ENCODE measurements at regions of chr2 and their contacts with region 1.

Region 1: DNA sequence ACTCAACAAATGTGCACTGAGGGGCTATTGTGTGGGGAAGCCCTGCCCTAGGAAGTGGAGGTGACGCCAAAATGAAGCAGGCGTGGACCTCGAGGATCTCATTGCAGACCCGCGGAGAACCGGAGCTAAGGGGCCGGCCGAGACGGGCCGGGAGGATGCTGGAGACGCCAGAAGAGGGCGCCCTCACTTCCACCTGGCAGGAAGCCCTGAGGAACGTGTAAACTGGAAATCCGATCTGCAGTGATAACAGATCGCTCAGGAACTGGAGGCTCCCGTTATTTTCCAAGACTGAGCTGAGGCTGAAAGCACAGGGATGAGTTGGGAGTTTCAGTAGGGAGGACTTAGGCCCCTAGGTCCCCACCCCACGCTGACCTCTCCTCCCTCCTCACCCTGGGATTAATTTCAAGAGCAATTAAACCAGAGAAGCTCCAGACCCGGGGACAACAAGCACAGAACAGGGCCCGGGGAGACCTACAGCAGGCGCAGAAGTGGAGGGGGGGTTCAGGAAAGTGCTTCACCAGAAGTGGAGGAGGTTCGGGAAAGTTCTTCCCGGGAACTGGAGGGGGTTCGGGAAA is 7.7 kb upstream of the COL6A3 start:
- DNase-seq: peak; percentile 77 to 85
- ATAC-seq: peak; percentile 84 to 92 (median 88)
- H3K4me3 ChIP-seq: peak overlapping the region in 7 of 10 donors; percentile 1 to 38 (median 27)
- H3K27ac ChIP-seq: peak overlapping the region in 9 of 10 donors; percentile 0 to 54 (median 23)
- H3K4me1 ChIP-seq: peaks cover 0 to 28% (median 18%) of the 10 kb centered on the region in 9 donors
- H3K27me3 ChIP-seq: peaks cover 0 to 10% (median 3%) of the 10 kb centered on the region in 7 donors
- CTCF ChIP-seq: peak; percentile 61 to 93 (median 87)

Region 2: DNA sequence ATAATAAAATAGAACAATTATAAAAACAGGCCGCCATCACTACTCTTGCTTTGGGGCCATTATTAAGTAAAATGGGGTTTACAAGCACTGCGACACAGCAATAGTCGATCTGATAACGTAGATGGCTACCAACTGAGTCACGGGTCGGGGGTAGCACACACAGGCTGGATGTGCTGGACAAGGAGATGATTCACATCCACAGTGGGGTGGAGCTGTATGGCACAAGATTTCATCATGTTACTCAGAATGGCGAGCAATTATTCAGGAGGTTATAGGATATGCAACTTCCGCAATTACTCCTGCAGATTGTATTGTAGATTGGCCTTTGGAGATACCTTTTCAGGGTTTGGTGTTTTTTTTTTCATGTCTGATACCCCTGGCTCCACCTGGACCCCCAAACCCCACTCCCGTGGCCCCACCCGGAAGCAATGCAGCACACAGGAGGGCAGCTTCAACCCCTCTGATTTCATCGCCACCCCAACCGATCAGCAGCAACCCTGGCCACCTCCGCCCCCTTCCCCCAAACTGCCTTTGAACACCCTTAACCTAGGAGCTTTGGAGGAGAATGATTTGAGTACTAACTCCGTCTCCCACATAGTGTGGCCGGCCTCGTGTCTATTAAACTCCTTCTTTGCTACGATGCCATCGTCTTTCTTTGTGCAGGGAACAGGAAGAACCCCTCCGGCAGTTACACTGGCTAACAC is 44.0 kb after region 1 on chr2:
- intact Hi-C with region 1: loop called in 3 of 10 experiments (anchors 5 kb)
- DNase-seq: no peak
- ATAC-seq: no peak
- H3K4me3 ChIP-seq: no peak overlapping the region
- H3K27ac ChIP-seq: no peak overlapping the region
- H3K4me1 ChIP-seq: no peaks in the 10 kb centered on the region
- H3K27me3 ChIP-seq: no peaks in the 10 kb centered on the region
- CTCF ChIP-seq: no peak

Region 3: GRCh38 chr2:237500681-237501424 is 79.2 kb after region 1 on chr2:
- intact Hi-C with region 1: no loop called
- DNase-seq: no peak
- ATAC-seq: peak in 4 of 8 donors; percentile 15 to 58 (median 48)
- H3K4me3 ChIP-seq: no peak overlapping the region
- H3K27ac ChIP-seq: no peak overlapping the region
- H3K4me1 ChIP-seq: peaks cover 0 to 26% (median 3%) of the 10 kb centered on the region in 9 donors
- H3K27me3 ChIP-seq: peaks cover 0 to 3% (median 0%) of the 10 kb centered on the region in 7 donors
- CTCF ChIP-seq: no peak

Region 4: DNA sequence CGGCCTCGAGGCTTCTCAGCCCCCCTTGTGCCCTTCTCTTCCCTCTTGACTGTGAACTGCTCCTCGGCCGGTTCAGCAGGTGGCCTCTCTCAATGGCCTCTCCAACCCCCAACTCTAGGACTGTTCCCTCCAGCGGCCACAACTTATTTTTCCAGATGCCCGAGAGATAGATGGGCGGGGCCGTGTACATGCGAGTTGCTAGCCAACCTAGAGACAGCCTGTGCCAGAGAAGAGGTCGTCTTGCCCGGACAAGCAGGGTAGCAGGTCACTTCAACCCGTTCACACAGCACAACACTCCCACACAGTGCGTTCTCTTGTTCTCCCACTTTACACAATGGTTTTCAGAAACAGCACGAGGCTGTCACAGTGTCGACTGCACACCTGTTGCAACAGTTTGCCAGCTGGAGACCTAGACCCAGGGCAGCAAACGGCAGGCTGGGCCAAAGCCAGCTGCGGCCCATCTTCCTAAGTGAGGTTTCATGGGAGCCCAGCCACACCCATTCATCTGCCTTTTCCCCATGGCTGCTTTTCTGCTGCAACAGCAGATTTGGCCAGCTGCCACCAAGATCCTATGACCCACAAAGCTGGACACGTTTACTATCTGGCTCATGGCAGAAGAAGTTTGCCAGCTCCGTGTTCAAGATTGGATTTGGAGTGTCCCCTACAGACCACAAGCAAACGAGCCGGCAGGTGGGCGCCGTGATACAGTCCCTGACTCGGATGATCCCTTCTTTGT is 137.4 kb after region 1 on chr2:
- intact Hi-C with region 1: no loop called
- DNase-seq: peak; percentile 44 to 49
- ATAC-seq: peak in 6 of 8 donors; percentile 15 to 69 (median 65)
- H3K4me3 ChIP-seq: no peak overlapping the region
- H3K27ac ChIP-seq: no peak overlapping the region
- H3K4me1 ChIP-seq: peaks cover 0 to 12% (median 9%) of the 10 kb centered on the region in 9 donors
- H3K27me3 ChIP-seq: peaks cover 0 to 7% (median 0%) of the 10 kb centered on the region in 7 donors
- CTCF ChIP-seq: no peak

Measured in heart right ventricle (tissue), 16 donors.